ENCODE measurements at regions of chr20 and their contacts with region 1.

Region 1: DNA sequence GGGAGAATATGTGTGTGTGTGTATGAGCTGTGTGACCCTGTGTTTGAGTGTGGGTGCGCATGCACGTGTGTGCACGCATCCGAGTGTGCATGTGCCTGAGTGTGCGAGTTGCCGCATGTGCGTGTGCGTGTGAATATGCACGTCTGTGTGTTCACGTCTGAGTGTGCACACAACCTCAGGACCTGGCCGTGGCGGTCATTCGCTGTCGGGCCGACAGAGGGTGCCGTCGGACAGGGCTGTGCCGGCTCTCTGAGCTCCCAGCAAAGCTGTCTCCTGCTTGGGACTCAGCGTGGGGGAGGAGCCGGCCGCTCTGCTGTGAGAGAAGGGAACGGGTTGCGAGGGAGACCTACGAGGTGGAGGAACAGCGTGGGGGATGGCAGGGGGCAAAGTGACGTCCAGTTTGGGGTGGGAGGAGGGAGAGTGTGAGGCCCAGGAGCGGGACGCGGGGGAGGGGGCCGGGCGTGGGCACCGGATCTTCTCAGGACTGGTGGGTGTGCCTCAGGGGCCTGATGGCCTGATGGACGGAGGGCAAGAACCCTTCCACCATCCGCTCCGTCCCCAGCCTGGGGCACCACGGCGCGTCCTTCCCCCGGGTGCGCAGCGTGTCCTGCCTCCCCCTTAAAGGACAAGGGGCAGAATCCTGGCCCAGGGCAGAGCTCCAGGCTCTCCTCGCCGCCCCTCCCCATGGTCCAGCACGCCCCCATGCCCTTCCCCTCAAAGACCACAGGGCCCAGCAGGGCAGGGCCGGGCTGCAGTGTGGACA is 19.9 kb downstream of the SLC17A9 start:
- DNase-seq: peak; percentile 79
- H3K4me3 ChIP-seq: no peak overlapping the region
- H3K27ac ChIP-seq: no peak overlapping the region
- H3K4me1 ChIP-seq: no peaks in the 10 kb centered on the region
- H3K27me3 ChIP-seq: peaks cover 27 to 29% of the 10 kb centered on the region in 2 experiments
- CTCF ChIP-seq: peak; percentile 85 to 93
- POLR2A ChIP-seq: no peak

Region 2: GRCh38 chr20:62875419-62876361 is 96.8 kb before region 1 on chr20:
- CTCF ChIA-PET with region 1: interaction called, 10 read pairs
- POLR2A ChIA-PET with region 1: no interaction called
- dilution Hi-C with region 1: no loop called
- intact Hi-C with region 1: no loop called
- DNase-seq: peak; percentile 77
- H3K4me3 ChIP-seq: no peak overlapping the region
- H3K27ac ChIP-seq: no peak overlapping the region
- H3K4me1 ChIP-seq: peaks cover 9% of the 10 kb centered on the region
- H3K27me3 ChIP-seq: peaks cover 0 to 3% of the 10 kb centered on the region in 2 experiments
- CTCF ChIP-seq: peak; percentile 23 to 62
- POLR2A ChIP-seq: no peak

Region 3: DNA sequence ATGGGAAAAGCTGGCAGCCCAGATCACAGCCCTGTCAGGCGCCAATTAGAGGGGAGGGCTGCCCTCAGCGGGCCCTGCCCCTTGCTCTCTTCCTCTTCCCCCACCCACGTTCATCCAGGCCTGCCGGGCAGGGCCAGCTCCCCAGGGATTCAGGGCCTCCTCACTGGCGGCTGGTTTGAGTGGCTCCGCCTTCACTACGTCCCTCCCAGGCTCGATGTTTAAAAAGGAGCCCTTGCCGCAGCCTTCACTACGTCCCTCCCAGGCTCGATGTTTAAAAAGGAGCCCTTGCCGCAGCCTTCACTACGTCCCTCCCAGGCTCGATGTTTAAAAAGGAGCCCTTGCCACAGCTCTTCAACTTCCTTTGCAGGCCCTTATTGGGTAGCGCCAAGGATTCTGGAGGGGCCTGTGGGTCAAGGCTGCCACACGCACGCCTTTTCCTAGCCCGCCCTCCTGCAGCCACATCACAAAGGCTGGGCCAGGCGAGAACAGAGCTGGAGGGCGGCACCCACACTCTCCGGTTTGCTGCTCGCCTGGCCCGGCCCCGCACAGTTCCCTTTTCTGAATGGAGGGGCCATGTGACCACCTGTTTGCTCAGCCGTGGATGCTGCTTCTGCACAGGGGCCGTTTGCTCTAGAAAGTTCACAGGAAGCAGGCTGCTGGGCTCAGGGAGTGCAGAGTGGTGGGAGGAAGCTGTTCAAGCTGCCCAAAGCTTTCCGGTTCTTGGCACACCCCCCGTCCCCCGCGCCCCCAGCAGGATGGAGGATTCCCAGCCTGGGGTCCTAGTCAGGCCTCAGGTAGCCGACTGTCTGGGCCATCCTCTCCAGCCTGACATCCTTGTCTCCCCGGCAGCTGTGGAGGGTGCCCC is 18.4 kb before region 1 on chr20:
- CTCF ChIA-PET with region 1: interaction called, 10 read pairs
- POLR2A ChIA-PET with region 1: no interaction called
- dilution Hi-C with region 1: no loop called
- intact Hi-C with region 1: loop called (anchors 1 kb)
- DNase-seq: peak; percentile 69
- H3K4me3 ChIP-seq: peak overlapping the region in 2 of 3 experiments; percentile 48 to 60
- H3K27ac ChIP-seq: peak overlapping the region; percentile 37
- H3K4me1 ChIP-seq: peaks cover 20% of the 10 kb centered on the region
- H3K27me3 ChIP-seq: no peaks in the 10 kb centered on the region
- CTCF ChIP-seq: no peak
- POLR2A ChIP-seq: peak; percentile 38

Region 4: DNA sequence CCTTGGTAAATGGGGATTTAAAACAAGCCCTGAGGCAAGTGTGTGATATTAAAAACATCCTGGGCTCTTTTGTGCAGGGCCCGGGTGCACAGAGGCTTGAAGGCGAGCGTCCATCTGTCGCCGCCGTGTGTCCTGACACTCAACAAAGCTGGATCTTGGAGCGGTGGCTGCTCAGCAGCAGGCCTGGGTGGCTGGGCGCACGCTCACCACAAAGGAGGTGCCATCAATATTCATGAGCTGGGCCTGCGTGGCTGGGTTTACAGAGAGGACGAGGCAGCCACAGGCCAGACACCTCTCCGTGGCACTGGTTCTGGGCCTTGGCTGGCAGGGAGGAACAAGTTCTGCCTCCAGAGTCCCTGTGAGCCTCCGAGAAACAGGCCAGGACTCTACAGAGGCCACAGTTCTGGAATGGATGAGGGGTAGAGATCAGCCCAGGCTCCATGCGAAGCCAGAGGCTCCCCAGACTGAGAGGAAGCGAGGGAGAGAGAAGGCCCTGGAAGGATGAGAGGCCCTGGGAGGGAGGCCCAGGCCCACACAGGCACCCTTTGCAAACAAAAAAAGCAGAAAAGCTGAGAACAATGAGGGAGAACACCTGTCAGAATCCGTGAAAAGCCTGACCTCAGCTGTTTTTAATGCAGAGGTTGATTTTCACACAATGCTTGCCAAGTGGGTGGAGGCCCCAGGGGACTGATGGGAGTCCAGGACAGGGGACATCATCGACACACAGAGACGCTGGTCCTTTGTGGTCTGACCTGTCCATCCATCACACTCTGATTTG is 12.4 kb after region 1 on chr20:
- CTCF ChIA-PET with region 1: interaction called, 18 read pairs
- POLR2A ChIA-PET with region 1: no interaction called
- dilution Hi-C with region 1: no loop called
- intact Hi-C with region 1: no loop called
- DNase-seq: no peak
- H3K4me3 ChIP-seq: no peak overlapping the region
- H3K27ac ChIP-seq: no peak overlapping the region
- H3K4me1 ChIP-seq: no peaks in the 10 kb centered on the region
- H3K27me3 ChIP-seq: peaks cover 11% of the 10 kb centered on the region in 2 experiments
- CTCF ChIP-seq: no peak
- POLR2A ChIP-seq: no peak

Region 5: DNA sequence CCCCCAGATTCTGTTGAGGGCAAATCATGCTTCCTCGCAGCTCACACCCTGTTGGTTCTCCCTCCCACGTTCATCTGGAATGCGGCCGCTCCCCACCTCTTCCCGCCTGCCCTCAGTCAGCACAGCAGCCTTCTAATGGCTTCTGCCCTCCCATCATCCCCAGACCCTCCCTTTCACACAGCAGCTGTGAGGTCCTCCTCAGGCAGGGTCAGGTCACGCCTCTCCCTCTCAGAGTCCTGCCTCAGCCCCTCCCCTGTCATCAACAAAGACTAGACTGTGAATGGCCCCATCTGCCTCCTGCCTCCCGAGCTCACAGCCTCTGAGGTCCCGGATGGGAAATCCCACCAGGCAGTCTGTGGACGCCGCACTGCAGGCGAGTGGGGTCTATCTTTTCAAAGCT is 42.3 kb after region 1 on chr20:
- CTCF ChIA-PET with region 1: interaction called, 35 read pairs
- POLR2A ChIA-PET with region 1: no interaction called
- dilution Hi-C with region 1: no loop called
- intact Hi-C with region 1: loop called (anchors 1 kb)
- DNase-seq: no peak
- H3K4me3 ChIP-seq: no peak overlapping the region
- H3K27ac ChIP-seq: no peak overlapping the region
- H3K4me1 ChIP-seq: no peaks in the 10 kb centered on the region
- H3K27me3 ChIP-seq: peaks cover 37 to 42% of the 10 kb centered on the region in 2 experiments
- CTCF ChIP-seq: no peak
- POLR2A ChIP-seq: no peak

Region 6: DNA sequence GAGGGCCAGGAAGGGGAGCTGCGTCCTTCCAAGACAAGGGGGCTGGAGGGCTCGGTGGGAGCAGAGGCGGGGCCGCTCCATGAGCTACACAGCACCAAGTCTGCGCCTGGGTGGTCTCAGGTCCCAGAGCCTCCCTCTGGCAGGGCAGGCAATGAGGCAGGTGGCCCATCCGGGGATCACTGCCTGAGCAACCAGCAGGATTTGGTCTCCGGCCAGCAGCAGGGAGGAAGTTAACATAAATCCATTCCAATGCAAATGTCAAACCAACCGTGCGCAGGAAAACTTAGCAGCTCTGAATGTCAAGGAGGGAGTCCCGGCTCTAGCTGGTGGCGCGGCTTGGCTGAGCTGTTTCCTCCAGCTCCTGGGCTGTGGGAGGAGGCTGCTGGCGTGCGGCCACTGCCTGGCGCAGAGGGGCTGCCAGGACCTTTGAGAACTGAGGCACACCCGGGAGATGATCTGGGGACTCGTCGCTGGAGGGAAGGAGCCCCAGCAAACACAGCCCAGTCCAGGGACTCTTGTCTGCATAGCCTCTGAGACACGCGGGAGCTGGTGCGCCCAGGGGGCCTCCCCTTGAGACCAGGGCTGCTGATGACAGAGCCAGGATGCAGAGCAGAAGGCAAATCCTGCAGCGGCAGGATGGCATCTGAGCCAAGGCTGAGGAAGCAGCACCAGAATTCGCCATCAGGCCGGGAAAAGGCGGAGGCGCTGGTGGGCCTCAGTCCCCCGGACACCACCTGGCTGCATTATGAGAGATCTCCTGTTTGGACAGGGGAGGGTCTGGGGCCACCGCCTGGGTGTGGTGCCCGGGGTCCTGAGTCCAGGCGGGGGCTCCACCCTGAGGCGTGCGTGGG is 421.8 kb after region 1 on chr20:
- CTCF ChIA-PET with region 1: no interaction called
- POLR2A ChIA-PET with region 1: no interaction called
- dilution Hi-C with region 1: no loop called
- intact Hi-C with region 1: no loop called
- DNase-seq: no peak
- H3K4me3 ChIP-seq: no peak overlapping the region
- H3K27ac ChIP-seq: no peak overlapping the region
- H3K4me1 ChIP-seq: no peaks in the 10 kb centered on the region
- H3K27me3 ChIP-seq: no peaks in the 10 kb centered on the region
- CTCF ChIP-seq: no peak
- POLR2A ChIP-seq: no peak

Measured in endothelial cell of umbilical vein (primary cell).